ENCODE measurements at regions of chr10 and their contacts with region 1.

Region 1: DNA sequence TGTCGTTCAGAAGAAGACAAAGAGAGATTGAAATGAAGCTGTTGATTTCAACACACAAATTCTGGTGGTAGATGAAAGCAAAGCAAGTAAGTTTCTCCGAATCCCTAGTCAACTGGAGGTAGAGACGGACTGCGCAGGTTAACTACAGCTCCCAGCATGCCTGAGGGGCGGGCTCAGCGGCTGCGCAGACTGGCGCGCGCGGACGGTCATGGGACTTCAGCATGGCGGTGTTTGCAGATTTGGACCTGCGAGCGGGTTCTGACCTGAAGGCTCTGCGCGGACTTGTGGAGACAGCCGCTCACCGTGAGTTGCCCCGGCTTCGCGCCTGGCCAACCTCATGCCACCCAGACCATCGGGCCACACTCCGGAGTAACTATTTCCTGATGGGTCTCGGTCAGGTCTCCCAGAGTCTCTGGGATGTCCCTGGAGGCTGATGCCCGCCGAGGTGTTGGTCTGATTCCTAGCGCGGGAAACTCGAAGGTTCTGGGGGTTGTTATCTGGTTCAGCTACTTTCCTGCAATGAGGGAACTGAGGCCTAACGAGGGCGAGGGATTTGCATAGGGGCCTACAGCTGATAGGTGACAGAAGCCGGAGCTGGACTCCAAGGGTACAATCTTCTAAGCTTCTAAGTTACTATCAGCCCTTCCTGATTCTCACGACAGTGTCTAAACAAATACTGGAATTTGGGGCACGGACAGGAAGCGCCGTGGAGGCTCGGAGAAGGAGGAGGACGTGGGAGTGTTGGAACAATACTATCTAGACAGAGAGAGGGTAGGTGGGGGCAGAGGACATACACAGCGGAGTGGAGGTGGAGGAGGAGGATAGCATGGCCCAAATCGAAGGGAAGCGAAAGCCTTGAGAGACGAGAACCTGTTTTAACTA is at the start of gene RPP30:
- DNase-seq: peak; percentile 76
- H3K4me3 Mint-ChIP-seq: peak within 1 kb of the TSS; percentile 100
- H3K27ac Mint-ChIP-seq: peak within 1 kb of the TSS; percentile 97
- H3K4me1 Mint-ChIP-seq: peaks cover 25% of the 10 kb centered on the region
- H3K27me3 Mint-ChIP-seq: peaks cover 21% of the 10 kb centered on the region
- total RNA-seq, gene RPP30: 69.1 and 73.4 TPM in 2 replicates

Region 2: GRCh38 chr10:89701238-89702120 is 1170.5 kb before region 1 on chr10 and contains the start of gene KIF20B:
- intact Hi-C with region 1: loop called (anchors 5 kb)
- DNase-seq: peak; percentile 96
- H3K4me3 Mint-ChIP-seq: peak within 1 kb of the TSS; percentile 97
- H3K27ac Mint-ChIP-seq: peak within 1 kb of the TSS; percentile 96
- H3K4me1 Mint-ChIP-seq: peaks cover 48% of the 10 kb centered on the region
- H3K27me3 Mint-ChIP-seq: no peaks in the 10 kb centered on the region
- total RNA-seq, gene KIF20B: 59.2 and 64.1 TPM in 2 replicates

Region 3: DNA sequence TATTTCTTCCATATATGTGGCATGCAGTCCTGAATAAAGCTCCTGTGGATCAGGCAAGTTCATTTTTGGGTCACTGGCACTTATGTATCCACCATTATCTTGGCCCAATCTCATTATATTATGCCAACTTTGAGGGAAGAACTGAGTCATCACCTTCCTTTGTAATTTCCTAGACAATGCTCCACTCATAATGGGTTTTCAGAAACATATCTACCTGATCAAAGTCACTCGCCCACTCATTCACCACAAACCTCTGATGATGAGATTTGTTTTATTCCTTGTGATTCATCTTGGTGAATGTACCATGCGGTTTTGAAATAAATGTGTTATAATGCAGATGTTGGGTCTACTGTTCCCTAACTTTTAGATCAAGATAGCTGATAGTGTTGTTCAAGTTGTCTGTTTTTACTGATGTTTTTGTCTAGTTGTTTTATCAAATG is 644.8 kb before region 1 on chr10:
- intact Hi-C with region 1: loop called (anchors 5 kb)
- DNase-seq: peak; percentile 10
- H3K4me3 Mint-ChIP-seq: no peak overlapping the region
- H3K27ac Mint-ChIP-seq: peak overlapping the region; percentile 12
- H3K4me1 Mint-ChIP-seq: peaks cover 8% of the 10 kb centered on the region
- H3K27me3 Mint-ChIP-seq: peaks cover 17% of the 10 kb centered on the region

Region 4: DNA sequence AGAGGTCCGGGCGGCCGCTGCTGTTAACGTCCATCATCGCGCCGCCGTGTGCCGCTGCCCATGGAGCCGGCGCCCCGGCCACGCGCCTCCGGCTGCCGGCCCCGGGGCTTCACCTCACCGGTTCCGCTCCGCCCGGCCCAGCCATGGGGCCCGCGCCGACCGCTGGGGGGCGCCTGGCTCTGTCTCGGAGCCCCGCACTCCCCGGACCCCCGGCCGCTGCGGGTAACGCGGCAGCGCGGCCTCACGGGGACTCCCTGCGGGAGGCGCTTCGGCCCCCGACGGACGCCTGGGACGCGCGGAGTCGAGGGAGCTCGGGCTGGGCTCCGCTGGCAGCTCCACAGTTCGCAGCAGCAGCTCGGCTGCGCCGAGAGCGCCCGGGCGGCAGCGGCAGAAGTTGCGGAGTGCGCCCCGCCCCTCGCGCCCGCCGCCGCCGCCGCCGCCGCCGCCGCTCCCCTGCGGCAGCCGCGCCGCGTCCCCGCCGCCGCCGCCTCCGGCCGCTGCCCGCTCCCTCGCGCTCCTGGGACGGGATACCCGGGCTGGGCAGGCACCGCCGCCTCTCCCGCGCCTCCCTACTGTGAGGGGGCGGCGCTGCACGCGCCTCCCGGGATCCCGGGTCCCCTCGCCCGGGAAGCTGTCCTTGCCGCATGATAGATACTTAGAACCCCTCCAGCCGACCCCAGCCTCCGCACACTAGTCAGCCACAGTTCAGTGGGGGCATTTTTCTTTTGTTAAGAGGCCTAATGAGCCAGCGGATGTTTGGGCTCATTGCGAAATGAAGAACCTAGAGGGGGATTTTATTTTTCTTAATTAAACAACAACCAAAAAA is 14.2 kb before region 1 on chr10 and contains the start of gene HTR7:
- intact Hi-C with region 1: loop called (anchors 2 kb)
- DNase-seq: peak; percentile 56
- H3K4me3 Mint-ChIP-seq: peak within 1 kb of the TSS; percentile 83
- H3K27ac Mint-ChIP-seq: no peak within 1 kb of the TSS
- H3K4me1 Mint-ChIP-seq: peaks cover 12% of the 10 kb centered on the region
- H3K27me3 Mint-ChIP-seq: peaks cover 77% of the 10 kb centered on the region
- total RNA-seq, gene HTR7: not detected in 2 replicates

Region 5: DNA sequence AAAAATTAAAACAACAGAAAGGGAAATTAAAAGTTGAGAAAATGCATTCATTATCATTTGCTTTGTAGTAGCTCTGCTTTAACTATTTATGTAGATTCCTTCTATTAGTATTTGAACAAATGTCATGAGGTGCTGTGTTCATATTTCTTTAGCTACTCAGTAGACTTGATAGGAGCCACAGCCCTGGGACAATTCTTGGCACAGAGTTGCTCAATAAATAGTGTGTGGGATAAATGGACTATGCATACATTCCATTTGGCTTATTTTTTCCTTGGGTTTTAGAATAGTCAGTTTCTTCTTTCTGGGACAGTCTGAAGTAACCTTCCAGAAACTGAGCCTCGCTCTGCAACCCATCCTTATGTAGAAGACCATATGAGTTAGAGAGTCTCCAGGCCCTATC is 13.2 kb after region 1 on chr10:
- intact Hi-C with region 1: no loop called
- DNase-seq: no peak
- H3K4me3 Mint-ChIP-seq: no peak overlapping the region
- H3K27ac Mint-ChIP-seq: no peak overlapping the region
- H3K4me1 Mint-ChIP-seq: no peaks in the 10 kb centered on the region
- H3K27me3 Mint-ChIP-seq: no peaks in the 10 kb centered on the region

Region 6: DNA sequence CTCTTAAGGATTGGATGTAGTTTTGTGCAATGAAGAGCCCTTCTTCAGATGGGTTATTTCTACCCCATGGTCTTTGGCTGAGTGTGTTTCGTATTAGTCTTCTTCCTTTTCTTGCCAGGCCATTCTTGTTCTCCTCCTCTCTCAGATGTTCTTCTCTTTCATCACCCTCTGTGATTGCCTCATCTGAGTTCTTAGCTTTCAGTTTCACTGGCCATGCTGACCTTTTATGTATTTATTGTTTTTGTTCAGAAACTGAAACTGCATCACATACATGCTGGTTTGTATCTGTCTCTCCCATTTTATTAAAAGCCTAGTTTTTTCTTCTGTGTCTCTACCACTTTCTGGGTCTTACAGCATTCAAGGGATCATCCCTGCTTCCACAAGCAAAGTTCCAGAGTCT is 326.8 kb after region 1 on chr10:
- intact Hi-C with region 1: loop called (anchors 5 kb)
- DNase-seq: no peak
- H3K4me3 Mint-ChIP-seq: peak overlapping the region; percentile 1
- H3K27ac Mint-ChIP-seq: peak overlapping the region; percentile 76
- H3K4me1 Mint-ChIP-seq: peaks cover 73% of the 10 kb centered on the region
- H3K27me3 Mint-ChIP-seq: no peaks in the 10 kb centered on the region

Measured in activated T-helper 2 cell treated with anti-CD3 and anti-CD28 coated beads, Interferon-gamma antibody, Interleukin-2, Interleukin-4, amounts not matched to agents 10 μg/mL and 5 μg/mL and 100 μg/mL, durations not matched to agents 14 hours and 24 hours and 36 hours (primary cell).